Cardiac septum (tissue), 1 donor: ENCODE measurements at regions of chr10 and their contacts with region 1.

Region 1: DNA sequence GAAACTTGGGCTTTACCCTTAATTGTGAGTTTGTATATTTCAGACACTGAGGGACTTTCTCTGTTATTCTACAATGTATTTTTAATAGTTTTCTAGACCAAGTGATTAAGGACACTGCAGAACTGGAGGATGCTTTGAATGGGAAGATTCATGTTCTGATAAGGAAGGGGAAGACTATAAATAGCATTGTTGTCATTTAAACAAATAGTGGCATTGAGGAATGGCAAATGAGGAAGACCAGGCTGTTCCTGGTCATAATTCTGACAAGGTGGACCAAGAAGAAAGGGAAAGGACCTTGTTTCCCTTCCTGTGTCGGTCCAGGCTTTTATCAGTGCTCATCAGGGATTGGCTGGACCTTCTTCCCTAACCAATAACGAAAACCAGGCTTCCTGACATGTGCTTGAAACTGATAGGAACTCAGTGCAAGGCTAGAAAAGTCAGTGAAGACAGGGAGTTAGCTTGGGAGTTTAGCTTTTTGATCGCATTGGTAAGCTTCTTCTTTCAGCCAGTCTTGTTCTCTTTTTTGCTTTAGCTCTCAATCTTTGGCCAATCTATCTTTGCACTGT is 116.2 kb downstream of the ITGA8 start:
- DNase-seq: no peak

Region 2: GRCh38 chr10:15630353-15630752 is 26.8 kb after region 1 on chr10:
- intact Hi-C with region 1: loop called (anchors 2 kb)
- DNase-seq: no peak

Region 3: DNA sequence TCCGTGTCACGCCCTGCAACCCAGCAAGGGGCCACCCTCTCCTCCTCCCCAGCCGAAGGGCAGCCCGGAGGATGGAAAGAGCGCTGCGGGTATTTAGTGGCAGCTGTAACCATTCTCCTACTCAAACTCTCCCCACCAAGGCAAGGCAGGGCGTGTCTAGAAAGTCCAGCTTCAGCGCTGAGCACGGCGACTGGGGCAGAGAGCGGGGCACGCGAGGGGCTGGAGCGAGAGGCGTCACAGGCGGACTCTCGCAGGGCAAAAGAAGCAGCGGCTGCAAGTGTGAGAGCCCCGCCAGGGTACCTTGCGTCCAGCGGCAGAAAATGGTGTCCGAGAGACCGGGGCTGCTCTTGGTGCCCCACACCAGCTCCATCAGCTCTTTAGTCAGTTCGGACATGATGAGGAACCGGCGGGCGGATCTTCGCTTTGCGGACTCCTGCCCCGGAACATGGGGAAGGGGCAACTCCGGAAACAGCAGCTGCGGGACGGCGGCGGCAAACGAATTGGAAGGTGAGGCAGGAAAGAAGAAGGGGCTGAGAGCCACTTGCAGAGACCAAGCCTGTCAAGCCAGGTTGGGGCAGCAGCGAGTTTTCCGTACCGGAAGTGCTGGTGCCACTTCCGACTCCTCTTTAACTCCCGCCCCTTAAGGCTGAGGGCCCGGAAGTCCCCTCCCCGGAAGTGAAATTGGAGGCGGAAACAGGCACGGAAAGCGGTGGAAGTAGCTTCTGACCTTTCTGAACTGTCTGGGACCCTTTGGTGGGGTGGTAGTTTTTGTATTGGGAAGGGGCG is 256.6 kb after region 1 on chr10 and contains the start of gene MINDY3:
- intact Hi-C with region 1: no loop called
- DNase-seq: peak; percentile 90
- total RNA-seq, gene MINDY3: 26.3 TPM